ENCODE measurements at regions of chr9 and their contacts with region 1.

Region 1: DNA sequence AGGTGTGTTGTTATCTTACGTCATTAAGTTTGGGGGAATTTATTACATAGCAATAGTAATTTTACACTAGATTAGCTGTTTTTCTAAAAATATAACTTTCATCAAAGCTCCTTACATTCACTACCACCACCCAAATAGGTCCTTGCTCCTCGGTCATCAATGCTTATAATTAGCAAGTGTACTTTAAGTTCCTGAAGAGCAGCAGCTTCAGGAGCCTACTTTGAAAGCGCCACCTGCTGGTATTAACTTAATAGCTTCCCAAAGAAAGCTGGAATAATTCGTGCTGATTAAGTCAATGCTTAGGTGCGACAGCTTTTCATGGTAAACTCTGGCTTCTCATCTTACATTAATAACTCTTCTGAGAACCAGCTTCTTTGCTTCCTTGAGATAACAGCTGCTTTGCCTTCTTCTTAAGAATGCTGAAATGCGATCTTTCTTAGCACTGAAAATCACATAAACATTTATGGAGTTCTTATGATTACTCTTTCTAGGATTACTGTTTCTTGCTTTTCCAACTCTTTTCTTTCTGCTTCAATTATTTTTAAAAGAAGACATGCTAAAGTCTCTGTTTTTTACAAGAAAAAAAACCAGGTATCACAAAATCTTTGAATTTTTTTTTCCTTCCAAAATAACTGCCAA is 10.0 kb upstream of the C5 start:
- DNase-seq: peak; percentile 40
- H3K4me3 Mint-ChIP-seq: no peak overlapping the region
- H3K27ac Mint-ChIP-seq: no peak overlapping the region
- H3K4me1 Mint-ChIP-seq: no peaks in the 10 kb centered on the region
- H3K27me3 Mint-ChIP-seq: no peaks in the 10 kb centered on the region
- CTCF ChIP-seq: peak; percentile 47

Region 2: GRCh38 chr9:120755827-120756434 is 304.2 kb before region 1 on chr9:
- CTCF ChIA-PET with region 1: interaction called, 5 read pairs
- intact Hi-C with region 1: loop called (anchors 5 kb)
- DNase-seq: peak; percentile 58
- H3K4me3 Mint-ChIP-seq: no peak overlapping the region
- H3K27ac Mint-ChIP-seq: no peak overlapping the region
- H3K4me1 Mint-ChIP-seq: no peaks in the 10 kb centered on the region
- H3K27me3 Mint-ChIP-seq: no peaks in the 10 kb centered on the region
- CTCF ChIP-seq: peak; percentile 68

Region 3: DNA sequence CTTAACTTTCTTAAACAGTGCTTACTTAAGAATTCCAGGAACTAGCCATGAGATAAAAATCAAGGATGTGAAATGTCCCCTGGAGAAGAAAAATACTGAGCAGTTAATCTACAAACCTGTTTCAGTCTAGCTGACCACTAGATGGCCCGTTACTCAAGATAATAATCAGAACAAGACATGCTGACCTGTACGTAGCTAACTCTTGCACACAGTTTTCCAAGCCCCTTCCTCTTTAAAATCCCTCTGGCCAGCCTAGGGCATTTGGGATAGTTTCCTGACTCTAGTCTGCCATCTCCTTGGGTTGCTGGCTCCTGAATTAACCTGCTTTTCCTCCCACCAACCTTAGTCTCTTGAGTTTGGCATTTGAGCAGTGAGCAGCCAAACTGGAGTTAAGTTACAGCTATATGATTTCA is 74.3 kb before region 1 on chr9:
- CTCF ChIA-PET with region 1: interaction called, 35 read pairs
- intact Hi-C with region 1: loop called (anchors 1 kb)
- DNase-seq: peak; percentile 16
- H3K4me3 Mint-ChIP-seq: no peak overlapping the region
- H3K27ac Mint-ChIP-seq: no peak overlapping the region
- H3K4me1 Mint-ChIP-seq: no peaks in the 10 kb centered on the region
- H3K27me3 Mint-ChIP-seq: no peaks in the 10 kb centered on the region
- CTCF ChIP-seq: peak; percentile 45

Region 4: GRCh38 chr9:121026260-121026691 is 33.8 kb before region 1 on chr9:
- CTCF ChIA-PET with region 1: interaction called, 9 read pairs
- intact Hi-C with region 1: loop called (anchors 2 kb)
- DNase-seq: peak; percentile 52
- H3K4me3 Mint-ChIP-seq: peak overlapping the region; percentile 47
- H3K27ac Mint-ChIP-seq: peak overlapping the region; percentile 88
- H3K4me1 Mint-ChIP-seq: peaks cover 32% of the 10 kb centered on the region
- H3K27me3 Mint-ChIP-seq: no peaks in the 10 kb centered on the region
- CTCF ChIP-seq: no peak